Ovary (tissue), 10 donors: ENCODE measurements at regions of chr6 and their contacts with region 1.

Region 1: GRCh38 chr6:73520688-73521350 is at the start of gene EEF1A1:
- DNase-seq: peak; percentile 99
- H3K4me3 ChIP-seq: peak within 1 kb of the TSS; percentile 76
- H3K27ac ChIP-seq: peak within 1 kb of the TSS; percentile 99
- H3K4me1 ChIP-seq: peaks cover 3% of the 10 kb centered on the region
- H3K27me3 ChIP-seq: no peaks in the 10 kb centered on the region
- CTCF ChIP-seq: peak in 1 of 3 donors; percentile 15
- EP300 ChIP-seq: no peak
- POLR2A ChIP-seq: peak; percentile 99
- total RNA-seq, gene EEF1A1: 15,703 to 19,058 (median 16,968) TPM

Region 2: DNA sequence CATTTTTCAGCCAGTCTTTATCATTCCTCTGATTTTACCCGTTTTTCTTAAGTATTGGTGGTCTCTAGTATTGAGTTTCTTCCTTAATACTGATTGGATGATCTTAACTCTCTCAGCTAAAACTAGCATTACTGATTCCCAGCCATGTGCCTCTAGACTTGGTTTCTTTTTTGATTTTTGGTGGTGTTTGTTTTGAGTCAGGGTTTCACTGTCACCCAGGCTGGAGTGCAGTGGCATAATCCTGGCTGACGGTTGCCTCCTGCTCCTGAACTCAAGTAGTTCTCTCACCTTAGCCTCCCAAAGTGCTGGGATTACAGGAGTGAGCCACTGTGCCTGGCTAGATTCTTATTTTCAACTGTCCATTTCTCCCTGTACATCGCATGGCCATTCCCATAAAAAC is 191.6 kb before region 1 on chr6:
- intact Hi-C with region 1: no loop called
- DNase-seq: no peak
- H3K4me3 ChIP-seq: no peak overlapping the region
- H3K27ac ChIP-seq: no peak overlapping the region
- H3K4me1 ChIP-seq: no peaks in the 10 kb centered on the region
- H3K27me3 ChIP-seq: no peaks in the 10 kb centered on the region
- CTCF ChIP-seq: no peak
- EP300 ChIP-seq: no peak
- POLR2A ChIP-seq: no peak

Region 3: DNA sequence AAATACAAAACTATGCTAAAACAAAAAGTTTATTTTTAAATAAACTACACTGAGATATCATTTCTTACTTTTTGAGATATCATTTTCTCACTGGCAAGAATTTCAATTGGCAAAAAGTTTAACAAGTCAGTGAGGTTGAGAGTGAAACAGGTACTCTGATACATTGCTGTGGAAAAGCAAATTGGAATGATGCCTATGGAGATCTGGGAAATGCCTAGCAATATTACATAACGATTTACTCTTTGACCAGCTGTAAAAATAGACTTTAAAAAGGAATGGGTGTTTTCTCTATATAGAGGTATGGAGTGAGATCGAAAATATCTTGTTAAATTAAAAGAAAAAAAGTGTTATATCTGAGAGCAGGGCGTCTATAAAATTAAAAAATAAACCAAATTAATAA is 85.6 kb before region 1 on chr6:
- intact Hi-C with region 1: no loop called
- DNase-seq: no peak
- H3K4me3 ChIP-seq: no peak overlapping the region
- H3K27ac ChIP-seq: no peak overlapping the region
- H3K4me1 ChIP-seq: no peaks in the 10 kb centered on the region
- H3K27me3 ChIP-seq: no peaks in the 10 kb centered on the region
- CTCF ChIP-seq: no peak
- EP300 ChIP-seq: no peak
- POLR2A ChIP-seq: no peak

Region 4: GRCh38 chr6:73580247-73581149 is 59.7 kb after region 1 on chr6:
- intact Hi-C with region 1: loop called in 3 of 4 experiments (anchors 2 to 5 kb)
- DNase-seq: peak; percentile 78 to 85 (median 84)
- H3K4me3 ChIP-seq: peak overlapping the region; percentile 13
- H3K27ac ChIP-seq: peak overlapping the region; percentile 69 to 84
- H3K4me1 ChIP-seq: peaks cover 8% of the 10 kb centered on the region
- H3K27me3 ChIP-seq: no peaks in the 10 kb centered on the region
- CTCF ChIP-seq: peak in 2 of 3 donors; percentile 24 to 51
- EP300 ChIP-seq: peak; percentile 40
- POLR2A ChIP-seq: peak; percentile 25

Region 5: DNA sequence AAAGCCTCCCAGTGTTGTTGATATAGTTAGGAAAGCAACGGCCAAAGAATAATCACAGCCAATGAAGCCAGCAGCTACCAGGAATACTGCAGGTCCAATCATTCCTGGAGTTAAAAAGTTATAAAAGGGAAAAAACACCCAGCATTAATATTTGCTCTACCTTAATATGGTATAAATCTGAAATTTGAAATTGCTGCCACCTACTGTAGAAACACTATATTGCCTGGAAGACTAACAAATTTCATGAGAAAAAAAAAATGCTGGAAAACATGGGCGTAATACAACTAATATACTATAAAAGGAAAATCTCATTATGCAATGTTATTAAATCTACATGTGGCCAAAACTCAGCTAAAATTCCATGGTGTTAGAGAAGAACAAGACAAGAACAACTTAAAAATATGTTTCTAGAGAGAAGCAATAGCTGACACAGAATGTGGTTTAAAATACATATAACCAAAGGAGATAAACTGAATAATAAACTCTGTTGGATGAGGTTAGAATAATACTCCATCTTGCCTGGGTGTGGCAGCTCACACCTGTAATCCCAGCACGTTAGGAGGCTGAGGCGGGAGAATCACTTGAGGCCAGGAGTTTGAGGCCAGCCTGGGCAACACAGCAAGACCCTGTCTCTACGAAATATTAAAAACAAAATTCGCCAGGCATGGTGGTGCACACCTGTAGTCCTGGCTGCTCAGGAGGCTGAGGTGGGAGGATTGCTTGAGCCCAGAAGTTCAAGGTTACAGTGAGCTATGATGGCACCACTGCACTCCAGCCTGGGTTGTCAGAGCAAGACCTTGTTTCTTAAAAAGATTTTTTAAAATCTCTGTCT is 89.8 kb after region 1 on chr6:
- intact Hi-C with region 1: loop called in 3 of 4 experiments (anchors 2 to 5 kb)
- DNase-seq: no peak
- H3K4me3 ChIP-seq: no peak overlapping the region
- H3K27ac ChIP-seq: no peak overlapping the region
- H3K4me1 ChIP-seq: no peaks in the 10 kb centered on the region
- H3K27me3 ChIP-seq: no peaks in the 10 kb centered on the region
- CTCF ChIP-seq: peak in 2 of 3 donors; percentile 39 to 64
- EP300 ChIP-seq: no peak
- POLR2A ChIP-seq: no peak

Region 6: DNA sequence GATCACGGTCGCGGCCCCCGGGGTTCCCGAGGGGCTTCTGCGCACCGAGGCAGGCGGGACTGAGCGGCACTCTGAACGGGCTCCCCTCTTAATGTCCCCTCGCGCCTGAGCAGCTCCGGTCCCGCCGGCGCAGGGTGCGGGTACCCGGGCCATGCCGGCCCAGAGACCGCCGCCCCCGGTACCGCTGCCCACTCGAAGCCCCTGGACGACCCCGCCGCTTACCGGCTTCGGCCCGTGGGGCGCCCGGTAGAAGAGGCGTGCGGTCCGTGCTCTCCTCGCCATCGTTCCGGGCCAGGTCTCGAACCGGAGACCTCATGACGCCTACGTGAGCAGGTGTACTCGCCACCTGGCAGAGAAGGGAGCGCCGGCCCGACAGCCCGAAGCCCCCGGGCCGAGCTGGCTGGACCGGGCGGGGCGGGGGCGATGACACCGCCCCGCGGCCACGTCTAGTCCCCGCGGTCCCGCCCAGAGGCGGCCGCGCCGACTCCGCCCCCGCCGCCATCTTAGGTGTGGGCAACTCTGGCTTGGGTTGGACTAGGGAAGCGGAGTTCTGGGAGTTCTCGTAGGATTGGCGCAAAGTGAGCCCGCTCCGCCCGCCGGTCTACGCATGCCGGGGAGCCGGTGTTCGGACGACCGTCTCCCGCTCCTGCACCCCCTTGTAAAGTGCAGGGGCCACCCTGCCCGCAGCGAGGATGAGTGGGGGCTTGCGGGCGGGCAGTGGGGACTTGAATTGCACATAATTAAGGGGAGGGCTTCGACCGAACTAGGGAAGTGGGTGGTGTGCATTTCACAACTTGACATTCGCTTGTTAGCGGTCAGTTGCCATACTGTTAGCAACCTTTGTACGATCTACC is 133.0 kb after region 1 on chr6 and contains the start of gene SLC17A5:
- intact Hi-C with region 1: loop called in 2 of 4 experiments (anchors 1 to 2 kb)
- DNase-seq: peak; percentile 88 to 94 (median 92)
- H3K4me3 ChIP-seq: peak within 1 kb of the TSS; percentile 72
- H3K27ac ChIP-seq: peak within 1 kb of the TSS; percentile 70 to 75
- H3K4me1 ChIP-seq: peaks cover 1% of the 10 kb centered on the region
- H3K27me3 ChIP-seq: no peaks in the 10 kb centered on the region
- CTCF ChIP-seq: peak in 1 of 3 donors; percentile 14
- EP300 ChIP-seq: no peak
- POLR2A ChIP-seq: peak; percentile 19
- total RNA-seq, gene SLC17A5: 6.3 to 18.3 (median 7.0) TPM